ENCODE measurements at regions of chr12 and their contacts with region 1.

Region 1: DNA sequence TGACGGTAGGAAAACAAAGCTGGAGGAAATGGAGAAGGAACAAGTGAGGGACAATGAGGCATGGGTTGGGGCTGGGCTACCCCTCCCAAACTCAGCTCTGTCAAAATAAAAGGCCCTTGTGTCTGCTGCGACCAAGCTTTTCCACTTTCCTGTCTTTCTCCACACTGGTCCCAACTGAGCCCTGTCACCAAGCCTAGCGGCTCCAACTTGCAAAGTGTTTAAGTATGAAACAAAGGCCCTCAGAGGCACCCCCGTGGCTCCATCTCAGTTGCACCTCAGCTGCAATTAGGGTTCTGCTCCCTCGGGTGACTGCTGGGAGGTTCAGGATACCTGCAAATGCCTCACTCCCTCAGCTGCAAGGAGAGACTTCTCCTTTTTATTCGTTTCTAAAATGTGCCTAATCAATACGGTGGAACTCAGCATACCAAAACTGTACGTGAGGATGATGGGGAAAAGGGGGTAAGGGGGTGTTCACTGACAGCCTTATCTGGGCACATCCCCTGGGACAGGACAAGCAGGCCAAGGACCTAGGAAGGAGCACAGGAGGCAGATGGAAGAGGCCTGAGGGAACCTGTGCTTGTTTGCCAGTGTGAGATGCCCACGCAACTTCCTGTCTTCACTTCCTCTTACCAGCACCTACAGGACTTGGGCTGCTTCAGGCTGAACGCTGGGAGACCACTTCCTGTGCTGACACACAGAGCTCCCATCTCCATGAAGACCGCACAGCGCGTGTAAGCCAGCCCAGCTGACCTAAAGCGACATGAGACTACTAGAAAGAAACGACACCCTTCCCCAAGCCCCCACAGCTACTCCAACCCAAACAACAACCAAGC is 8.9 kb downstream of the VAMP1 start:
- DNase-seq: peak; percentile 92
- H3K4me3 Mint-ChIP-seq: peak overlapping the region; percentile 76
- H3K27ac Mint-ChIP-seq: peak overlapping the region; percentile 99
- H3K4me1 Mint-ChIP-seq: peaks cover 87% of the 10 kb centered on the region
- H3K27me3 Mint-ChIP-seq: no peaks in the 10 kb centered on the region

Region 2: GRCh38 chr12:6335451-6336078 is 126.1 kb before region 1 on chr12:
- CTCF ChIA-PET with region 1: interaction called, 43 read pairs
- POLR2A ChIA-PET with region 1: interaction called, 11 read pairs
- intact Hi-C with region 1: loop called (anchors 2 kb)
- DNase-seq: peak; percentile 94
- H3K4me3 Mint-ChIP-seq: no peak overlapping the region
- H3K27ac Mint-ChIP-seq: no peak overlapping the region
- H3K4me1 Mint-ChIP-seq: peaks cover 20% of the 10 kb centered on the region
- H3K27me3 Mint-ChIP-seq: no peaks in the 10 kb centered on the region

Region 3: DNA sequence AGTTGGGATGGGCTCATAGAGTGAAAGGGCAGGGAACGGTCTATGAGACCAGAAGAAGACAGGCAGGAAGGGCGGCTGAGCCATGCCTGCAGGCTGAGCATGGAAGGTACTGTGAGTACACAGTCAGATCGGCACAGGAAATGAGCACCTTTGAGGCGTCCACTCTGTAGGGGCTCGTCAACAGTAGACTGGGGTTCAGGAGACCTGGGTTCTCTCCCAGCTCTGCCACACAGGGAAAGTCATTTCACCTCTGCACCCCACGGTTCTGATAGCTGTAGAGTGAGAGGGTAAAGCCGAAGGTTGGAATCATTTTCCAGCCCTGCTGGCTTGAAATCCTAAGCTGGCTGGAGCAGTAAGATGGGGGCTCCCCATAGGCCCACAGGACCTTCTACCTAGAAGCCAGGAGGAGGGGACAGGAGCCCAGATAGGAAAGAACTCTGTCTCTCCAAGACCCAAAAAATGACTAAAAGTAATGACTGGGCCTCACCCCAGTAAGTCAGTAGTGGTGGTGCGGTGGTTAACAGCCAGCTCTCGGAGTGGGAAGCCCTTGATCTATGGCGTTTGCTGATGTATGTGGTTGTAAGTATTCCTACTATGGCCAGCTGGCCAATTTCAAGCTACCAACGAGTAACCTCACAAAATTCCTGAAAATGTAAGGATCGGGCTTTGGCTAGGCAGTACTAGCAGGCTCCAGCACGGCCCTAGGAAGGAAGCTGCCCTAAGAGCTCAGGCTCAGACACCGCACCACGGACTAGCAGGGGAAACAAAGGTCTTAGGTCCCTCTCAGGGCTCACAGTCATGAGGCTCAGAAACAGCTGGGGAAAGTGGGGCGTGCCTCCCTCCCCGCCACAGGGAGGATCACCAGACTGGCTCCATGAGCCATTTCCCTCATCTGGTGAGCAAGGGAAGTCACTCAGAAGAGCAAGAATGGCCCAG is 27.1 kb before region 1 on chr12:
- CTCF ChIA-PET with region 1: interaction called, 16 read pairs
- POLR2A ChIA-PET with region 1: interaction called, 10 read pairs
- intact Hi-C with region 1: no loop called
- DNase-seq: peak; percentile 67
- H3K4me3 Mint-ChIP-seq: no peak overlapping the region
- H3K27ac Mint-ChIP-seq: peak overlapping the region; percentile 84
- H3K4me1 Mint-ChIP-seq: peaks cover 62% of the 10 kb centered on the region
- H3K27me3 Mint-ChIP-seq: no peaks in the 10 kb centered on the region

Region 4: DNA sequence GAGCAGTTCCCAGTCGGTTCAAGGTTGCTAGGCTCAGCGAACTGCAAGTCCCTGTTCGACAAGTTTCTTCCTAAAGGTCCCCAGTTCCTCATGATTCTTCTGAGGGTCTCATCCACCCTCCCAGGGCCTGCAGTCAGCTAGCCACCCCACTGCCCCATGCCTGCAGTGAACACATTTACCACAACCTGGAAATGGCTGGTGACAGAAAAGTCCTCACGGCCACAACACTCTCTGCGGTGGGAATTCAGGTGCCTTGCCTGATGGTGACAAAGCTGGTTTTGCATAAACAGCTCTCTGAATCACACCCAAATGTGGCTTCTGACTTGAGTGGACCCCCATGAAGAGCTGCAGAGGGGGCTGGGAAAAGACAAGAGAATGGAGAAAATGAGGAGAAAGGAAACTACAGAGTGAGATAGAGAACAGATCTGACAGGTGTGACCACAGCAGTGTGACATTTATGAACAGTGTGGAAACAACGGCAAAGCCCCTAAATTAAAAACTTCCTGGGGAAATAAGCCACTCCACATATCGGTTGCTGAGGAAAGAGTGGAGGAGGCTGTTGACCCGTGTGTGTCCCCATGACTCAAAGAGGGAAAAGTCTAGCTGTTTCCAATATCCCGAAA is 18.1 kb before region 1 on chr12:
- CTCF ChIA-PET with region 1: interaction called, 45 read pairs
- POLR2A ChIA-PET with region 1: interaction called, 96 read pairs
- intact Hi-C with region 1: loop called (anchors 1 kb)
- DNase-seq: peak; percentile 75
- H3K4me3 Mint-ChIP-seq: peak overlapping the region; percentile 91
- H3K27ac Mint-ChIP-seq: peak overlapping the region; percentile 98
- H3K4me1 Mint-ChIP-seq: peaks cover 69% of the 10 kb centered on the region
- H3K27me3 Mint-ChIP-seq: no peaks in the 10 kb centered on the region

Region 5: DNA sequence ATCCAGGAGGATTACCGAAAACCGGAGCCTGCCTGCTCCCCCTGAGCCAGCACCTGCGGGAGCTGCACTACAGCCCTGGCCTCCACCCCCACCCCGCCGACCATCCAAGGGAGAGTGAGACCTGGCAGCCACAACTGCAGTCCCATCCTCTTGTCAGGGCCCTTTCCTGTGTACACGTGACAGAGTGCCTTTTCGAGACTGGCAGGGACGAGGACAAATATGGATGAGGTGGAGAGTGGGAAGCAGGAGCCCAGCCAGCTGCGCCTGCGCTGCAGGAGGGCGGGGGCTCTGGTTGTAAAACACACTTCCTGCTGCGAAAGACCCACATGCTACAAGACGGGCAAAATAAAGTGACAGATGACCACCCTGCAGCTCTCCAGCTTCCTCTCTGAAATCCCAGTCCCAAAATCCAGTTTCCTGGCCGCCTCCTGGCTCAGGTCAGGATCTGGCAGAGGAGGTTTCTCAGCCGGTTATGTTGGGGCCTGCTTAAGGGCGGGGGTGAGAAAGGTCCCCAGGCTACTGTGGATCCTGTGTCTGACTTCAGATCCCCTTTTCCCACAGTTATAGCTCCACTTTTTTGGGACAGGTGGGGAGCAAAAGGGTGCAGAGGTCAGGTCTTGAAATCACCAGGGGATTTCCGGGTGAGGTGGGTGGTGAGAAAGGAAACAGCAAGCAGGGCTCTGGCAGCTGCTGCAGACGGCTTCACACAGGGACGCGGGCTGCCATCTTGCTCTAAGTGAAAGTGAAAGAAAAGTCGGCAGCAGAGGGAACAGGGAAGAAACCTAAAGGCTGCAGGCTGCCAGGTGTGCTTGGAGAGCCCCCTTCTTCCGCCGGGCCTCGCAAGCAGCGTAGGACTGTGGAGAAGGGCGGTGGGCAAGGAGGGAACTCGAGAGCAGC is 10.0 kb before region 1 on chr12 and contains the start of gene TAPBPL:
- CTCF ChIA-PET with region 1: interaction called, 50 read pairs
- POLR2A ChIA-PET with region 1: interaction called, 96 read pairs
- intact Hi-C with region 1: loop called (anchors 1 kb)
- DNase-seq: peak; percentile 90
- H3K4me3 Mint-ChIP-seq: peak within 1 kb of the TSS; percentile 99
- H3K27ac Mint-ChIP-seq: peak within 1 kb of the TSS; percentile 100
- H3K4me1 Mint-ChIP-seq: peaks cover 62% of the 10 kb centered on the region
- H3K27me3 Mint-ChIP-seq: no peaks in the 10 kb centered on the region
- total RNA-seq, gene TAPBPL: 33.4 to 35.0 TPM

Region 6: DNA sequence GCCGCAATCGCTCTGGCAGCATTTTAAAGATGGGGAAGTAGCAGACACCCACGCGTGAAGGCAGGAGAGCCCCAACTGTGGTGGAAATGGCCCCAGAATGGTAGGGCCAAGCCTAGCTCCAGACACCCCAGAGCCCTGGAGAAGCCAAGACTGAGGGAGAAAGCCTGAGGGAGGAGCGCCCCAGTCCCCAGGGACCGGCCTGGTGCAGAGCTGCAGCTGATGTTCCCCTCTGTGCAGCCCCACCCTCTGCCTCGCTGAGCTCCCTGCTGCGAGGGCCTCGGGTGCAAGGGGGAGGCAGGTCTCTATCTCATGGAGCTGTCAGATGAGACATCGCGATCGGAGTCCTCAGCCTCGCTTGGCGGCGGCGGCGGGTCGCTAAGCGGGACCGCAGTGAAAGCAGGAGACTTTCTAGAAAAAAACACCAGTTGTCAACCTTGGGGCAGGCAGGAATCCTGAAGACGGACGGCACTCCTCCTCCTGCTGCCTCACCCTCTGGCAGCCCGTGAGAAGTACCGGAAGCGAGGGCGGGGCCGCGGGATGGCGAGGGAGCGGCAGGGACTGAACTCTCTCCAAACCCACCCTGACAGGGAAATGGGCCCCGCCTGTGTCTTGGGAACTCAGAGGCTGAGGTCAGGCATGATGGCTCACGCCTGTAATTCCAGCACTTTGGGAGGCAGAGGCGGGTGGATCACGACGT is 78.7 kb after region 1 on chr12:
- CTCF ChIA-PET with region 1: interaction called, 14 read pairs
- POLR2A ChIA-PET with region 1: interaction called, 54 read pairs
- intact Hi-C with region 1: loop called (anchors 2 kb)
- DNase-seq: peak; percentile 73
- H3K4me3 Mint-ChIP-seq: peak overlapping the region; percentile 51
- H3K27ac Mint-ChIP-seq: peak overlapping the region; percentile 81
- H3K4me1 Mint-ChIP-seq: peaks cover 58% of the 10 kb centered on the region
- H3K27me3 Mint-ChIP-seq: no peaks in the 10 kb centered on the region

Region 7: GRCh38 chr12:6890789-6891645 is 429.4 kb after region 1 on chr12:
- CTCF ChIA-PET with region 1: no interaction called
- POLR2A ChIA-PET with region 1: no interaction called
- intact Hi-C with region 1: no loop called
- DNase-seq: peak; percentile 99
- H3K4me3 Mint-ChIP-seq: peak overlapping the region; percentile 84
- H3K27ac Mint-ChIP-seq: peak overlapping the region; percentile 97
- H3K4me1 Mint-ChIP-seq: peaks cover 17% of the 10 kb centered on the region
- H3K27me3 Mint-ChIP-seq: no peaks in the 10 kb centered on the region